Activated CD8-positive, alpha-beta memory T cell treated with anti-CD3 and anti-CD28 coated beads, Interleukin-2, amount 10 ng/mL, durations not matched to agents 7 days and 5 days (primary cell): ENCODE measurements at regions of chr1 and their contacts with region 1.

Region 1: DNA sequence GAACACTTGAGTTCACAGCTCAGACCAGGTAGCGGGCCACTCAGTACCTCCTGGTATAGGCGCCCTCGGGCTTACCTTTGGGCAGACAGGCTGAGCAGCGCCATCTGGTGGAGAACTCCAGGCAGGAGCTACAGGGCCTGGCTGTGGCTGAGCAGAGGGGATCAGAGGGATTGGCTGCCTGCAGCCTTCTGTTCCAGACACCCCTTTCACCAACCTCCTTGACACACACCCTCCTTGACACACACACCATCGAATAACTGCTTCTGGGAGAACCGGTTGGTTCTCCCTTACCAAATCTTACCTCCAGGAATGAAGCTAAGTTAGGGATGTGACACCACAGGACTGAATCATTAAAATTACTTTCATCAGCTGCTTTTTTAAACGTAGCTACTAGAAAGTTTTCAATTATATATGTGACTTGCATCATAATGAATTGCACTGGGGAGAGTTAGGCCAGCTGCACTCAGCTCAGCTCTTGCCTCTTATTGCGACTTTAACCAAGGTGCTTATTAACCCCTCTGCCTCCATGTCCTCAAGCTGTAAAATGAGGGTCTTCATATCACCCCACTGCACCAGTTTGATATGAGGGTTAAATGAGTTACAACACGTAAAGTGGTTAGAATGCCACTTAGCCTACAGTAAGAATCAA is 6.6 kb downstream of the LIN28A start:
- DNase-seq: peak; percentile 90
- ATAC-seq: peak; percentile 99
- H3K4me3 Mint-ChIP-seq: no peak overlapping the region
- H3K27ac Mint-ChIP-seq: no peak overlapping the region
- H3K4me1 Mint-ChIP-seq: peaks cover 2% of the 10 kb centered on the region
- H3K27me3 Mint-ChIP-seq: peaks cover 57% of the 10 kb centered on the region

Region 2: DNA sequence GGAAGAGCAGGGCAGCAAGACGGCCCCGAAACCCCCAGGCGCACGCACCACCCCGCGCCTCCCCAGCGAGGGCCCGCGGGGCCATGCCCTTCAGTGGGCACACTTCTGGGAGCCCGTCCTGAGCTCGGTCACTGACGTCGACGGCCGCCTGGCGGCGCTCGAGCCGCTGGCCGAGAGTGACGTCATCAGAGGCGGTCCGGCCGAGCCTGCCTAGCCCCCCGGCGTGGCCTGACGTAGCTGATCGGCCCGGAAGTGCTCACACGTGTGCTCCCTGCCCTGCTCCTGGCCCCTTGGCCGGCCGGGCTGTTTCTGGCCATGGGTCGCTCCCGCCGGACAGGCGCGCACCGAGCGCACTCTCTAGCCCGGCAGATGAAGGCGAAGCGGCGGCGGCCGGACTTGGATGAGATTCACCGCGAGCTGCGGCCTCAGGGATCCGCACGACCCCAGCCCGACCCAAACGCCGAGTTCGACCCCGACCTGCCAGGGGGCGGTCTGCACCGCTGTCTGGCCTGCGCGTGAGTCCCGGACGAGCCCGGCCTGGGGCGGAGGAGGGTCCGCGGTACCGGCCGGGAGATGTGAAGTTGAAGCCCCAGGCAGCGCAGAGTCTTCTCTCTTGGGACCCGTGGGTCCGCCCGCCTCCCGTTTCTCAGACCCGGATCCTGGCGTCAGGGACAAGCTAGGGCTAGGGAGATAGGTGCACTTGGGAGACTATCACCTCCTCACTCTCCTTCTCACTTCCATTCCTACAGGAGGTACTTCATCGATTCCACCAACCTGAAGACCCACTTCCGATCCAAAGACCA is 247.4 kb before region 1 on chr1 and contains the start of gene ZNF593:
- CTCF ChIA-PET with region 1: interaction called, 12 read pairs
- DNase-seq: peak; percentile 92
- ATAC-seq: peak; percentile 97
- H3K4me3 Mint-ChIP-seq: peak within 1 kb of the TSS; percentile 89
- H3K27ac Mint-ChIP-seq: peak within 1 kb of the TSS; percentile 88
- H3K4me1 Mint-ChIP-seq: peaks cover 26% of the 10 kb centered on the region
- H3K27me3 Mint-ChIP-seq: peaks cover 11% of the 10 kb centered on the region
- total RNA-seq, gene ZNF593: 40.1 to 48.1 TPM

Region 3: GRCh38 chr1:26321315-26322041 is 95.8 kb before region 1 on chr1:
- CTCF ChIA-PET with region 1: interaction called, 25 read pairs
- DNase-seq: peak; percentile 97
- ATAC-seq: peak; percentile 74
- H3K4me3 Mint-ChIP-seq: peak overlapping the region; percentile 73
- H3K27ac Mint-ChIP-seq: peak overlapping the region; percentile 95
- H3K4me1 Mint-ChIP-seq: peaks cover 49% of the 10 kb centered on the region
- H3K27me3 Mint-ChIP-seq: no peaks in the 10 kb centered on the region

Region 4: GRCh38 chr1:26372039-26372438 is 45.2 kb before region 1 on chr1:
- CTCF ChIA-PET with region 1: interaction called, 10 read pairs
- DNase-seq: no peak
- ATAC-seq: no peak
- H3K4me3 Mint-ChIP-seq: no peak overlapping the region
- H3K27ac Mint-ChIP-seq: peak overlapping the region; percentile 82
- H3K4me1 Mint-ChIP-seq: peaks cover 74% of the 10 kb centered on the region
- H3K27me3 Mint-ChIP-seq: no peaks in the 10 kb centered on the region

Region 5: DNA sequence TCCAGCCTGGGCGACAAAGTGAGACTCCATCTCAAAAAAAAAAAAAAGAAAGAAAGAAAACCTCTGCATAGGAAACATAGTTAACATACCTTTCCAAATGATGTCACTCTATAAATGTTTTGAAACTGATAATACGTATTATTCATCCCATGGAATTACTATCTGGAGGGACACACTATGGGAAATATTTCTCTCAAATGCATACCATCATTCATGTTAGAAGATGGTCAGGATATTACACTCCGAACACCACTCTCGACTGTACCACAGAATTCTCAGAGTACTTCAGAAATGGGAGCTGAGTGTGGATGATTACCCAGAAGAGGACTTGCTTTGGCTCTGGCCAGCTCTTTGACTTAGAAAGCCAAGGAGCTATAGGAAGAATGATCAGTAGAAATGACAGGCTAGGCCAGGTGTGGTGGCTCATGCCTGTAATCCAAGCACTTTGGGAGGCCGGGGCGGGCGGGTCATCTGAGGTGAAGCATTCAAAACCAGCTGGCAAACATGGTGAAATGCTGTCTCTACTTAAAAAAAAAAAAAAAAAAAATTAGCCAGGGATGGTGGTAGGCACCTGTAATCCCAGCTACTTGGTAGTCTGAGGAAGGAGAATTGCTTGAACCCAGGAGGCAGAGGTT is 11.8 kb before region 1 on chr1:
- CTCF ChIA-PET with region 1: interaction called, 30 read pairs
- DNase-seq: no peak
- ATAC-seq: no peak
- H3K4me3 Mint-ChIP-seq: no peak overlapping the region
- H3K27ac Mint-ChIP-seq: no peak overlapping the region
- H3K4me1 Mint-ChIP-seq: peaks cover 15% of the 10 kb centered on the region
- H3K27me3 Mint-ChIP-seq: peaks cover 49% of the 10 kb centered on the region